ENCODE measurements at regions of chr7 and their contacts with region 1.

Region 1: GRCh38 chr7:44797329-44798251 is 1.1 kb downstream of the PPIA start:
- DNase-seq: peak; percentile 80 to 92 (median 84)
- H3K4me3 ChIP-seq: peak overlapping the region; percentile 73 to 83
- H3K4me3 Mint-ChIP-seq: peak overlapping the region; percentile 87 to 97 (median 94)
- H3K27ac ChIP-seq: peak overlapping the region; percentile 96
- H3K27ac Mint-ChIP-seq: peak overlapping the region; percentile 94 to 98 (median 97)
- H3K4me1 ChIP-seq: peaks cover 34% of the 10 kb centered on the region
- H3K4me1 Mint-ChIP-seq: peaks cover 18 to 57% (median 30%) of the 10 kb centered on the region in 4 donors
- H3K27me3 ChIP-seq: no peaks in the 10 kb centered on the region
- H3K27me3 Mint-ChIP-seq: no peaks in the 10 kb centered on the region

Region 2: DNA sequence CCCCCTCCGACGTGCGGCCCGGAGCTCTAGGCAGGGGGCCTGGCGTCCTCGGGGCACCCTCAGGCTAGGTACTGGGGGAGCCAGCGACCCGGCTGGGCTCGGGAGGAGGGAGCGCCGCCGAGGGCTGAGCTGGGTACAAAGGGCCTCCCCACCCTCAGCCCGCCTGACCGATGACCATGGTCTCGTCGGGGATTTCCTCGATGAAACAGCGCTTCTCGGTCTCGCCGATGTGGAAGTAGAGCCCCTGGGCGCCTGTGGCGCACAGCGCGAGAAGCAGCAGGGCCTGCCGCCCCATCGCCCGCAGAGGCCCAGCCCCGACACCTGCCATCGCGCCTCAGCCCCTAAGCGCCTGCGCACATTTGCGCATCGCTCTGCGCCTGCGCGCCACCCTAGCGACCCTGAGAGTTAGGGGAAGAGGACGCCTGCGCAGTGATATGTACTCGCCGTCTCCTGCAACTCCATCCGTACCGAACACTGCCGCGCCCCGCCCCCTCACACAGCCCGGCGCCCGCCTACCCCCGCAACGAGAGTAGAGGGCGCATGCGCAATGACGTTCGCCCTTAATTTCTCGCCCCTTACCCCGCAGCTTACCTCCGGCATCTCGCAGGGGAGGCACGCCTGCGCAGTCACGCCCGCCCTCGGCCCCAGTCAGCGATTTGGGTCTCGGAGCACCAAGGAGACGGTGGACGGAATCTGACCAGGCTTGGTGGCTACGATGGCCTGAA is 215.5 kb before region 1 on chr7 and contains the start of gene TMED4:
- CTCF ChIA-PET with region 1: interaction called, 6 read pairs
- POLR2A ChIA-PET with region 1: interaction called, 28 read pairs
- intact Hi-C with region 1: loop called (anchors 1 kb)
- DNase-seq: peak; percentile 100
- H3K4me3 ChIP-seq: peak within 1 kb of the TSS; percentile 79 to 98
- H3K4me3 Mint-ChIP-seq: peak within 1 kb of the TSS; percentile 90 to 95 (median 92)
- H3K27ac ChIP-seq: peak within 1 kb of the TSS; percentile 89
- H3K27ac Mint-ChIP-seq: peak within 1 kb of the TSS; percentile 97 to 99 (median 98)
- H3K4me1 ChIP-seq: peaks cover 34% of the 10 kb centered on the region
- H3K4me1 Mint-ChIP-seq: peaks cover 18 to 44% (median 32%) of the 10 kb centered on the region in 4 donors
- H3K27me3 ChIP-seq: no peaks in the 10 kb centered on the region
- H3K27me3 Mint-ChIP-seq: no peaks in the 10 kb centered on the region
- total RNA-seq, gene TMED4: 108 to 110 TPM

Region 3: GRCh38 chr7:44606450-44607254 is 190.9 kb before region 1 on chr7 and contains the start of gene OGDH:
- CTCF ChIA-PET with region 1: interaction called, 3 read pairs
- POLR2A ChIA-PET with region 1: interaction called, 31 read pairs
- intact Hi-C with region 1: loop called (anchors 1 kb)
- DNase-seq: peak; percentile 99 to 100 (median 100)
- H3K4me3 ChIP-seq: peak within 1 kb of the TSS; percentile 54 to 63
- H3K4me3 Mint-ChIP-seq: peak within 1 kb of the TSS; percentile 82 to 100 (median 98)
- H3K27ac ChIP-seq: peak within 1 kb of the TSS; percentile 97
- H3K27ac Mint-ChIP-seq: peak within 1 kb of the TSS; percentile 99 to 100 (median 99)
- H3K4me1 ChIP-seq: peaks cover 40% of the 10 kb centered on the region
- H3K4me1 Mint-ChIP-seq: peaks cover 19 to 50% (median 38%) of the 10 kb centered on the region in 4 donors
- H3K27me3 ChIP-seq: no peaks in the 10 kb centered on the region
- H3K27me3 Mint-ChIP-seq: peaks cover 0 to 2% of the 10 kb centered on the region in 2 donors
- total RNA-seq, gene OGDH: 116 to 126 TPM

Region 4: GRCh38 chr7:44638611-44639557 is 158.7 kb before region 1 on chr7:
- CTCF ChIA-PET with region 1: no interaction called
- POLR2A ChIA-PET with region 1: interaction called, 14 read pairs
- intact Hi-C with region 1: loop called (anchors 2 kb)
- DNase-seq: peak; percentile 72 to 91 (median 79)
- H3K4me3 ChIP-seq: peak overlapping the region; percentile 0 to 48
- H3K4me3 Mint-ChIP-seq: peak overlapping the region; percentile 32 to 95 (median 90)
- H3K27ac ChIP-seq: peak overlapping the region; percentile 96
- H3K27ac Mint-ChIP-seq: peak overlapping the region; percentile 97 to 100 (median 100)
- H3K4me1 ChIP-seq: peaks cover 90% of the 10 kb centered on the region
- H3K4me1 Mint-ChIP-seq: peaks cover 57 to 87% (median 79%) of the 10 kb centered on the region in 4 donors
- H3K27me3 ChIP-seq: no peaks in the 10 kb centered on the region
- H3K27me3 Mint-ChIP-seq: no peaks in the 10 kb centered on the region

Region 5: GRCh38 chr7:44748045-44748947 is 49.3 kb before region 1 on chr7 and contains the start of gene ZMIZ2:
- CTCF ChIA-PET with region 1: interaction called, 6 read pairs
- POLR2A ChIA-PET with region 1: interaction called, 18 read pairs
- intact Hi-C with region 1: loop called (anchors 1 kb)
- DNase-seq: peak; percentile 88 to 98 (median 92)
- H3K4me3 ChIP-seq: peak within 1 kb of the TSS; percentile 44 to 78
- H3K4me3 Mint-ChIP-seq: peak within 1 kb of the TSS; percentile 80 to 95 (median 86)
- H3K27ac ChIP-seq: peak within 1 kb of the TSS; percentile 90
- H3K27ac Mint-ChIP-seq: peak within 1 kb of the TSS; percentile 89 to 98 (median 96)
- H3K4me1 ChIP-seq: peaks cover 44% of the 10 kb centered on the region
- H3K4me1 Mint-ChIP-seq: peaks cover 33 to 51% (median 38%) of the 10 kb centered on the region in 4 donors
- H3K27me3 ChIP-seq: no peaks in the 10 kb centered on the region
- H3K27me3 Mint-ChIP-seq: no peaks in the 10 kb centered on the region
- total RNA-seq, gene ZMIZ2: 169 to 170 TPM

Region 6: DNA sequence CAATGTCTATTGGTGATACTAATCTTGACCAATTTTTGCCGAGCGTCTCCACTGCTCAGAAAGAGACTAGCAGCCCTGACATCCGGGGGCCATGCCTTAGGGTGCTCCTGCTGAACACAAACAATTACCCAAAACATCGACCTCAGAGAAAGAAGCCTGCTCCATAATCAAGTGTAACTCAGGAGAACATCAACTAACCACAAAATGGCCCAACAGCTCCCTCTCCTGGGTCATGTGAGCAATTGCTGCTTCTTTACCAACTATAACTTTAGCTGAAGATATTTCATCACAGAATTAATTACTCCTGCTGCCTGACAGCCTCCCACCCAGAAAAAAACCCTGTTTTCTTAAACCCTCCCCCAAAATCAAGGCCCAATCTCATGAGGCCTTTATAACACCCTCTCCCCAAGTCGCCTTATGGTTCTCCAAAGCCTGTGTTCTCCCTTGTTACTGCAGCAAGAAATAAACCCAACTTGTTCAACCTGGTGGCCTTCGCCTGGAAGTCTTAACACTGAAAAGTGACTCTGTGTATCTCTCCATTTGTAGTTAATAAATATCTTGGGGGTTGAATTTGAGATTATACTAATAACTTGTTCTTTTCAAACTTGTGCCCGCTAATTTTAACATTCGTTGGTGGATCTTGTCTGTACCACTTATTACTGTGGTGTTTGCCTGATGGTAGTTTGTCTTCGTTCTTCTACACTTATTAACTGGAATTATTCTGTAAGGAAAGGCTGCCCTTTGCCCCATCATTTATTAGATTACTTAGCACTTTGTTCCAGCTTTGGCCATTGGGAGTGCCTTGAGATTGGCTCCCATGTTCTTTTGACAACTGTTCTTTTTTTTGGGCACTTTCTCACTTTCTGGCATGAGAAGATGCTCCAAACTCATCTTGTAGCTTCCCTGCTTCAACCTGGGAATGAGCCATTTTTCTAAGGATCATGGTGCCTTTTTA is 338.8 kb after region 1 on chr7:
- CTCF ChIA-PET with region 1: no interaction called
- POLR2A ChIA-PET with region 1: no interaction called
- intact Hi-C with region 1: loop called (anchors 1 kb)
- DNase-seq: peak; percentile 65 to 77 (median 74)
- H3K4me3 ChIP-seq: no peak overlapping the region
- H3K4me3 Mint-ChIP-seq: peak overlapping the region in 1 of 8 donors; percentile 55
- H3K27ac ChIP-seq: no peak overlapping the region
- H3K27ac Mint-ChIP-seq: peak overlapping the region in 5 of 7 donors; percentile 1 to 86 (median 73)
- H3K4me1 ChIP-seq: peaks cover 4% of the 10 kb centered on the region
- H3K4me1 Mint-ChIP-seq: peaks cover 6 to 11% (median 9%) of the 10 kb centered on the region in 4 donors
- H3K27me3 ChIP-seq: no peaks in the 10 kb centered on the region
- H3K27me3 Mint-ChIP-seq: no peaks in the 10 kb centered on the region

Measured in CD4-positive, alpha-beta memory T cell (primary cell).